A549 (cell line): ENCODE measurements at regions of chr22 and their contacts with region 1.

Region 1: GRCh38 chr22:38973289-38974169 is 8.6 kb upstream of the APOBEC3B start:
- DNase-seq: peak; percentile 41 to 58
- ATAC-seq: peak; percentile 81 to 86
- H3K4me3 ChIP-seq: no peak overlapping the region
- H3K27ac ChIP-seq: no peak overlapping the region
- H3K4me1 ChIP-seq: no peaks in the 10 kb centered on the region
- CTCF ChIP-seq: peak; percentile 53
- EP300 ChIP-seq: no peak
- POLR2A ChIP-seq: no peak
- RAD21 ChIP-seq: peak; percentile 53 to 59

Region 2: DNA sequence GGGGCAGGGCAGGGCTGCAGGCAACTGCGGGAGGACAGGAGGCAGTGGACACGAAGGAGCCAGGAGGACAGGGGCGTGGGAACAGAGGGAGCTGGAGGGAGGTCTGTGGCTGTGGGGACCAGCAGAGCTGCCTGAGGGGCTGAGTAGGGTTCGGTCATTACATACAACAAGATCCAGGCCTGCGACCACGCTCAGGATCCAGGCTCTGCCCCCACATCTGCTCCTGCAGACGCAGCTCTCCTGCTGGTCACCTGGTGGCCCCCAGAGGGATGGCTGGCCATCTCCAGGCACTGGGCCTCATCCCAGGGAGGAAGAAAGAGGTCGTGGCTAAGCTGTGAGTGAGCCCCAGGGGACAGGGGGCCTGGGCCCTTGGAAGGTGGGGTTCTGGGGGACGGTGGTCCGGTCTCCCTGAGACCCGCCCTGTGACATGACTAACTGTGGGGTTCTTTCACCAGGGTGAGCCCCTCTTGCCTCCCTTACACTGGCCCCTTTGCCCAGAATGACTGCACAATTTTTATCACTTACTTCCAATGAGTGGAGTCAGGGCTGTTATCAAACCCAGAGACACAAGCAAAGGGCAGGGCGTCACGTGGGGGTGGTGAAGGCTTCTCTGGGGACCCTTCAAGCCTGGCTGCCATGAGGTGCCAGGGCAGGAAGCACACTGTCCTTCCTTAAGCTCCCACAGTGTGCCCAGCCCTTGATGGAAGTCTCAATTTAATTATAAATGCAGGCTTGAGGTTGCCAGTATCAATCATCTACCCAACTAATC is 22.8 kb before region 1 on chr22:
- CTCF ChIA-PET with region 1: interaction called, 10 read pairs
- POLR2A ChIA-PET with region 1: no interaction called
- DNase-seq: no peak
- ATAC-seq: peak in 1 of 2 experiments; percentile 42; a peak in 1 of 6 replicates
- H3K4me3 ChIP-seq: no peak overlapping the region
- H3K27ac ChIP-seq: no peak overlapping the region
- H3K4me1 ChIP-seq: peaks cover 7% of the 10 kb centered on the region; the same call in 2 of the 3 replicates
- CTCF ChIP-seq: no peak
- EP300 ChIP-seq: no peak
- POLR2A ChIP-seq: no peak
- RAD21 ChIP-seq: no peak